ENCODE measurements at regions of chr19 and their contacts with region 1.

Region 1: DNA sequence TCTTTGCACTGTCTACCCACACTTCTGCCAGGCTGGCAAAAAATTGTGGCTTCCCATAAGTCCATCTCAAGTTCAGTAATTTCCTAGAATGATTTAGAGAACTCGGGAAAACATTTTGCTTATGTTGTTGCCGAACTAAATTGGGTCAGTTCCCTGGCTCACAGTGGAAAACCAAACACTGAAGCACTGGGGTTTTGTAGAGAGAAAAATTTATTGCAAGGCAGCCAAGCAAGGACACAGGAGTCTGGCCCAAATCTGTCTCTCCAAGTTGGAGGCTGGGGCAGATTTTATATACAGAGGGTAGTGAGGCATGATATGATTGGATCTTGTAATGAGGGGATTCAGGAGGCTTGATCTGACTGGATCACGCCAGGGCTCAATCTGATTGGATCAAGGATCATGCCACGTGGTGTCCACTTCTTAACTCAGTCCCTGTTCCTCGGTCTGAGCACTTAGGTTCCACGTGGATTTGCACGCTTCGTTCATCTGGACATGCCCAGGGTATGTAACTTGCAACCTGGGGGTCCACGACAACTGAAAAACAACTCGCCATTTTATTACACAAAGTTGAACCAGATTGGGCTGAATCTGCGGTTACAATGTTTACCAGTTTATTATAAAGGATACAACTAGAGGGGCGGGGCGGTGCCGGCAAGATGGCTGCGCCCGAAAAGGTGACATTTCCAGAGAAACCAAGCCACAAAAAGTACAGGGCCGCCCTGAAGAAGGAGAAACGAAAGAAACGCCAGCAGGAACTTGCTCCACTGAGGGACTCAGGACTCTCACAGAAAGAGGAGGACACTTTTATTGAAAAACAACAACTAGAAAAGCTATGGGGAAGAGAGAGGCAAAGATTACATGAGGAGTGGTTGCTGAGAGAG is 7.3 kb downstream of the CD209 start:
- DNase-seq: no peak
- CTCF ChIP-seq: no peak

Region 2: DNA sequence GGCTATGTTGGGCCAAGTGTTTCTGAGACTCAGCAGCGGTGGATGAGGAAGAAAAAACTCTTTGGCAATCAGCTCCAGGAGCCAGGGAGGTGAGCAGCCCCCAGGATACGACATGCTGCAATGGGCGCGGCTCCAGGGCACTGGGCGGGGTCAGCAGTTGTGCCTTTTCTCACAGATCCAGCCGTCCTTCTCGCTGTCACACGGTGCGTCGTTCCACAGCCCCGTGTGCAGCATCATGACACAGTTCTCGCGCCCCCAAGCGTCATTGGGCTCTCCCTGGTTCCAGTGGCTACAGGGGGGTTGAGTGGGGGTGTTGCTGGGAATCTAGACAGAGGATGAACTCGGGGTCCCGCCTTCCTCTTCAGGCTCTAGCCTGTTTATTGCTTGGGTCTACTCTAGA is 10.8 kb before region 1 on chr19:
- CTCF ChIA-PET with region 1: interaction called, 11 read pairs
- POLR2A ChIA-PET with region 1: no interaction called
- DNase-seq: no peak
- CTCF ChIP-seq: no peak

Region 3: GRCh38 chr19:7928736-7929701 is 189.0 kb after region 1 on chr19:
- CTCF ChIA-PET with region 1: no interaction called
- POLR2A ChIA-PET with region 1: no interaction called
- DNase-seq: peak; percentile 75
- CTCF ChIP-seq: peak; percentile 49

Measured in GM10248 (cell line).